AG04449 (cell line): ENCODE measurements at regions of chr9 and their contacts with region 1.

Region 1: GRCh38 chr9:124754289-124754688 is 16.8 kb downstream of the NR6A1 start:
- DNase-seq: no peak
- H3K4me3 ChIP-seq: no peak overlapping the region
- CTCF ChIP-seq: peak; percentile 62

Region 2: DNA sequence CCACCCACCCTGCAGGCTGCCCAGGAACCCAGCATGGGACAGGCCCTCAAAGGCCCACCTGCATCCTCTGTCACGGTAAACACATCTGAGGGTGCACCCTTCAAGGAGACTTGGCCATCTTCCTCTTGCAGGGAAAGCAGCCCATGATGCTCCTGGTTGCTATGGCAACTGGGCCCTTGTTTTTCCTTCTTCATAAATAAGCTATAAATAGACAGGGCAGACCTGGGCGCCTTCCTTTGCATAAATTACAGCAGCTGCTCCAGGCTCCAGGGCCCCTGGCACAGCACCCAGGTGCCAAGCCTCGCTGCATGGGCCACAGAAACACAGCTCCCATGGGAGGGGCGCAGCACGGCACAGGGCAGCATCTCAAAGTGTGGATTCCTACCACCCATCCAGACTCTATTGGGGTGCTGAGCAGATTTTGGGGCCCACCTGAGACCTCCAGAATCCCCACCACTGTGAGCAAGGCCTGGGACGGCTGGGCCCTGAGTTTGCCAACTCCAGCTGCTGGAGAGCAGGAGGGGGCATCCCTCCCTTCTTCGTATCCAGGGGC is 333.2 kb before region 1 on chr9:
- CTCF ChIA-PET with region 1: interaction called, 27 read pairs
- POLR2A ChIA-PET with region 1: no interaction called
- DNase-seq: no peak
- H3K4me3 ChIP-seq: no peak overlapping the region
- CTCF ChIP-seq: no peak

Region 3: DNA sequence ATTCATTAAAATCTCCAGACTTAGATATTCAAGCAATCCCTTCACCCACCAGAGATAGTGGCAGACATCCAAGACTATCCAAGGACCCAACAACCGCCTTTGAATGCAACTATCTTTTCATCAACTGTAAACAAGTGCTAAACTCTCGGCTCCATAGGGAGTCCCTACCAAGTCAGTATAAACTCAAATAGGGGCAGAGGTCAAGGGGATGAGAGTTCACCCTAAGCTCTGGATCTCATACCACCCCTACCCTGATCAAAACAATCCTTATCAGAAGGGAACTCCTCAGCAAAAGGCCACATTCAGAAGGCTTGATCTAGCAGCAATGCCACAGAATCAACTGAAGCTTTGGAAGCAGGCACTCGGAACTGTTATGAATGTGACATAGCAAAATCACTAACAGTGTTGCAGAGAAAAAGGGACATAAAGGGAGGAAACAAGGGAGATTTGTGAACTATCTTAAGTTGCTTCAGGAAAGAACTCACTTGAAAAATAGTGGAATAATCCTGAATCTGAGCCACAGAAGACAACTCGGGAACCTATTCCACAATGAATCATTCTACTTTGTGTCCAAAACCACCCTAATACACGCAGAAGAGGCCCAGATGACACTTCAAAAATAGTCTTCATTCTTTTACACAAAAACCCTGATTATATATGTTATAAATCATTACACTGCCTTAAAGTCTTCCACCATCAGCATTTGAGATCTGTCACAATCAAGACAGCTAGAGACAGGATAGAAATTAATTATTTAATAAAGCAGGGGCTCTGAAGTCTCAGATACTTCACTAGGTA is 33.0 kb before region 1 on chr9:
- CTCF ChIA-PET with region 1: interaction called, 11 read pairs
- POLR2A ChIA-PET with region 1: no interaction called
- DNase-seq: no peak
- H3K4me3 ChIP-seq: no peak overlapping the region
- CTCF ChIP-seq: no peak

Region 4: GRCh38 chr9:124743686-124744348 is 10.5 kb before region 1 on chr9:
- CTCF ChIA-PET with region 1: interaction called, 11 read pairs
- POLR2A ChIA-PET with region 1: no interaction called
- DNase-seq: no peak
- H3K4me3 ChIP-seq: no peak overlapping the region
- CTCF ChIP-seq: no peak

Region 5: GRCh38 chr9:124764774-124765438 is 10.6 kb after region 1 on chr9:
- CTCF ChIA-PET with region 1: interaction called, 34 read pairs
- POLR2A ChIA-PET with region 1: no interaction called
- DNase-seq: no peak
- H3K4me3 ChIP-seq: no peak overlapping the region
- CTCF ChIP-seq: peak; percentile 20

Region 6: DNA sequence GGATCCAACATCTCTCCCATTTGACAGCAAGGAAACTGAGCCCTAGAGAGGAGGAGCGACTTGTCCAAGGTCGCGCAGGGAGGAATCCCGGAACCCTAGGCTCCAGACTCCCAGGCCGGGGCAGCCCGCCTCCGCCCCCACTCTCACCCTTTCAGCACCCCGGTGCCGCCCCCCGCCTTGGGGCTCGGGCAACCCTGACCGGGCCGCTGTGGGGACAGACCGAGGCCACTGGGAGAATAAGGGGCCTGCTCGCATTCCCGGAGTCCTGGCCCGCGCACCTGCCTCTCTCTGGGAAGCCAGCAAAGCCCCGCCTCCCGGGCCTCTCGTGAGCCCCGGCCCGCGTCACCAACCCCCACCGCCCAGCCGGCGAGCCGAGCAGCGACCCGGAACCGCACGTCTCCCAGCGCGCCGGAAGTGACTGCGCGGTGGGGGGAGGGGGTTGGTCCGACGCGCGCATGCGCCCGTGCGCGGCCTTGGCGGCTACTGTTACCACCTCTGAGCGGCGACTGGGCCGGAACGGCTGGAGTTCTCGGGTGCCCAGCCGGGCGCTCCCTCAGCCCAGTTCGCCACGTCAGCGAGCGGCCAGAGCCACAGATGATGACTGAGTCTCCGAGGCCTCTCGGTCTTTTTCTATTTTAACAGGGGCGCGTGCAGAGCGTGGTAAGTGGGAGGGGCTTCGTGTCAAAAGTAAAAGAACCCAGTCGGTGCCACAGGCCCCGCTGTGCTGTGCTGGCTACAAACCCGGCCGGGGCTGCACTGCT is 186.6 kb after region 1 on chr9 and contains the start of gene GOLGA1:
- CTCF ChIA-PET with region 1: no interaction called
- POLR2A ChIA-PET with region 1: no interaction called
- DNase-seq: no peak
- H3K4me3 ChIP-seq: peak within 1 kb of the TSS; percentile 77
- CTCF ChIP-seq: no peak